ENCODE measurements at regions of chr18 and their contacts with region 1.

Region 1: GRCh38 chr18:9334329-9334972 is at the start of gene TWSG1:
- DNase-seq: peak; percentile 95
- ATAC-seq: peak; percentile 86
- H3K4me3 Mint-ChIP-seq: peak within 1 kb of the TSS; percentile 82
- H3K27ac Mint-ChIP-seq: peak within 1 kb of the TSS; percentile 67
- H3K4me1 Mint-ChIP-seq: peaks cover 22% of the 10 kb centered on the region
- H3K27me3 Mint-ChIP-seq: peaks cover 3% of the 10 kb centered on the region
- total RNA-seq, gene TWSG1: 7.9 to 8.8 TPM

Region 2: DNA sequence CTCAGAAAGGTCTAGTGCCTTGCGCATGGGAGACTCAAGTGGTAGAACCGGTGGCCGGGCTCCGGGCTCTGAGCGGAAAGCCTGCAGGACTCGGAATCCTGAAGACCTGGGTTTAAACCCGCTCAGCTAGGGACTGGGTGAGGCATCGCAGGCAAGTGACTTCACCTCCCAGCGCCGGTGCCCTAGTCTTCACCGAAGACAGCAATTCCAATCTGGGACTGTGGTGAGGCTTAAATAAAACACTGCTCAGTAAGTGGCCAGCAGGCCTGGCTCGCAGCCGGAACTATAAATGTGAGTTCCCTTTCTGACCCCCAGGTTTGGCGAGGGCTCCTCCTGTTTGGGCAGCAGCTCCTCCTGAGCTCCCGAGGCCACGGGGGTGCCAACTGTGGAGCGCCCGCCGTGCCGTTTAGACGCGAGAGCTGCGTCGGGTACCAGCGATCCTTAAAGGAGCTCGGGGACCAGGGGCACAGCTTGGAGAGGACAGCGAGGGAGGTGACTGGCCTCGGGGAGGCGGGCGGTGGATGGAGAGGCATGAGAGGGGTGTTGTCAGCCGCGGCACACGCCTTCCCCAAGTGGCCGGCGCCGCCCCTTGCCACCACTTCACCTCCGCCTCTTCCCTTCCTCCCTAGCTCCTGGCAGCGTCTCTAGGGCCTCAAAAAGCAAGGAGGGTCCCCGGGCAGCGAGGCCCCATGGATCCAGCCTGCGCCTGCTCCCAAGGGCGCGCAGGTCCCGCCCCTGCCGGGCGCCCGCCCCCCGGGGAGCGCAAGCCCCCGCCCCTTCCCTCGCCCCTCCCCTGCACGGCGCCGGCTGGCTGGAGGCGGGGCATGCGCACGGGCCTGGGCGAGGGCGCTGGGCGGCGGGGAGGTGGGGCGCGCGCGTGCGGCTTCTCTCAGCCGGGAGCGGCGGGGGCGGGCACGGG is 629.8 kb before region 1 on chr18:
- CTCF ChIA-PET with region 1: no interaction called
- POLR2A ChIA-PET with region 1: no interaction called
- intact Hi-C with region 1: loop called (anchors 1 to 10 kb)
- DNase-seq: peak; percentile 90
- ATAC-seq: peak; percentile 98
- H3K4me3 Mint-ChIP-seq: peak overlapping the region; percentile 80
- H3K27ac Mint-ChIP-seq: no peak overlapping the region
- H3K4me1 Mint-ChIP-seq: peaks cover 12% of the 10 kb centered on the region
- H3K27me3 Mint-ChIP-seq: peaks cover 47% of the 10 kb centered on the region

Region 3: DNA sequence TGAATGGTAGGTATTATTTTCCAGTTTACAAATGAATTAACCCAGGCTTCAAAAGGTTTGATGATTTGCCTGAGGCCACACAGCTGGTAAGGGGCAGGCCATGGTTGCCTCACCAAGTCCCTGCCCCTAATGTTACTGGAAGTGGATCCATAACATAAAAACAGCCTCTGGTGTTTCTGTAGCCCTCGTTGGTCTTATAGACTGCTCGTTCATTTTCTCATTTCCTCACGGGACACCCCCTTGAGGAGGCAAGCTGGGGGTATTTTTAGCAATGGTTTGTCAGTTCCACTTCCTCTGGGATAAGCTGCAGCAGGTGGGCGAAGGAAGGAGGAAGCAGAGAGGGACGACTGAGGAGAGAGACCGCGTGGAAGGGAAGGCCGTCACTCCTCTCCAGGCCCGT is 264.9 kb before region 1 on chr18:
- CTCF ChIA-PET with region 1: interaction called, 4 read pairs
- POLR2A ChIA-PET with region 1: no interaction called
- intact Hi-C with region 1: loop called (anchors 1 to 5 kb)
- DNase-seq: no peak
- ATAC-seq: no peak
- H3K4me3 Mint-ChIP-seq: no peak overlapping the region
- H3K27ac Mint-ChIP-seq: peak overlapping the region; percentile 40
- H3K4me1 Mint-ChIP-seq: peaks cover 21% of the 10 kb centered on the region
- H3K27me3 Mint-ChIP-seq: no peaks in the 10 kb centered on the region

Region 4: DNA sequence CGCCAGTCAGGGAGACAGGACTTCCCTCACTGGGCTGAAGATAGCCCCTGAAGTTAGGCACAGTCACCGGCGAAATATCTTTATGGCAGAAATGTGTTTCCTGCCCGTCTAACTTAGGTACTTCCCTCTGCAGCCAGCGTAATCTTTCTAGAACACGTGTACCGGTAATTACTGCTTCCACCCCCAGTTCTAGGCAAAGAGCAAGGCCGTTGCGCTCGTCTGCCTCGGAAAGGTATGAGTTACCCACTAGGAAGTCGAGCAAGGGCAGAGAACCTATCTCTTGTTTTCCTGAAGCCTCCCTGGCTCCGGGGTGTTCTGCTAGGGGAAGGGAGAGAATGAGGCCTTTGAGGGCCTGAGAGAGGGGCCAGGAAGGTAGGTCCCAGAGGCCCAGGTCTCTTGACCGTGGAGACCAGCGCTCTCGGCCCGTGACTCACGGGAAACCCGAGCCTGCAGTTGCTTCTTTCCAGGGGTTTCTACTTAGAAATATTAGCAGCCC is 70.2 kb after region 1 on chr18:
- CTCF ChIA-PET with region 1: no interaction called
- POLR2A ChIA-PET with region 1: no interaction called
- intact Hi-C with region 1: loop called in 1 of 2 experiments (anchors 2 kb)
- DNase-seq: peak; percentile 57
- ATAC-seq: peak; percentile 87
- H3K4me3 Mint-ChIP-seq: peak overlapping the region; percentile 70
- H3K27ac Mint-ChIP-seq: peak overlapping the region; percentile 82
- H3K4me1 Mint-ChIP-seq: peaks cover 13% of the 10 kb centered on the region
- H3K27me3 Mint-ChIP-seq: no peaks in the 10 kb centered on the region

Region 5: DNA sequence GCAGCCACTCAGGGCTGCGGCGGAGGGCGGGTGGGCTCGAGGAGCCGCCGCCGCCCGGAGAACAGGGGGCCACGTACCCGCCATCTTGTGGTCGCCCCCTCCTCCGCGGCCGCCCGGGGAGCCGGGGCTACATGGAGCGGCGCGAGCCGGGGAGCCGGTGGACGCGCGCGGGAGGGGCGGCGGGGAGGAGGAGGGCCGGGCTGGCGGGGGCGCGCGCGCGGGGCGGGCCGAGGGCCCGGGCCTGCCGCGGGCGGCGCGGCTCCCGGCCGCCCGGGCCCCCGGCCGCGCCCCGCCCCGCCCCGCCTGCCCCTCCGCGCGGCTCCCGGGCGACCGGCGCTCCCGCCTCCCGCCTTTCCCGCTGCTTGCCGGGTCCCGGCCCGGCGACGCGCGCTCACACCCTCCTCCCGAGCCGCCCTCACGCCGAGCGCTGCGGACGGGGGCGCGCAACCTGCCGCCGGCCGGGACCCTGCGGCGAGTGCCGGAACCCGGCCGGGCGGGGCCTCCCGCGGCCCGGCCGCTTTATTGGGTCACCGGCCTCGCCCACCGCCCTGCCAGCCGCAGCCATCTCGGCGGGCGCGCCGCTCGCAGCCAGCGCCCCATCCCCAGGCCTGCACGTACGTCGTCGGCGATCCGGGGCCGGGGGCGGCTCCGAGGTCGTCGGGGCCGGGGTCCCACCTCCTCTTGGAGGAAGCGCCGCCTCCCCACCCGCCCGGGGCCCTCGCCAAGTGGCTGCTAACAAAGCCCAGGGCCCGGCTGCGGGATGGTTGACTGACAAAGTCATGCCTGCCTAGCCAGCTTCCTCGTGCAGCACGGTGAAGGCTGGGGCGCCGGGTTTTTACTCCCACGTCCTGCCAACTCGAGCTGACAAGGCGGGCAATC is 280.2 kb after region 1 on chr18 and contains the start of gene PPP4R1:
- CTCF ChIA-PET with region 1: no interaction called
- POLR2A ChIA-PET with region 1: no interaction called
- intact Hi-C with region 1: loop called (anchors 2 to 10 kb)
- DNase-seq: peak; percentile 84
- ATAC-seq: peak; percentile 57
- H3K4me3 Mint-ChIP-seq: peak within 1 kb of the TSS; percentile 93
- H3K27ac Mint-ChIP-seq: peak within 1 kb of the TSS; percentile 79
- H3K4me1 Mint-ChIP-seq: peaks cover 29% of the 10 kb centered on the region
- H3K27me3 Mint-ChIP-seq: no peaks in the 10 kb centered on the region
- total RNA-seq, gene PPP4R1: 32.2 to 33.3 TPM

Measured in activated CD4-positive, alpha-beta T cell treated with anti-CD3 and anti-CD28 coated beads for 36 hours (primary cell).